Endothelial cell of umbilical vein (primary cell): ENCODE measurements at regions of chr3 and their contacts with region 1.

Region 1: GRCh38 chr3:129627429-129628168 is 21.1 kb upstream of the PLXND1 start:
- DNase-seq: peak; percentile 90
- H3K4me3 ChIP-seq: peak overlapping the region in 2 of 3 experiments; percentile 11 to 42
- H3K27ac ChIP-seq: peak overlapping the region; percentile 85
- H3K4me1 ChIP-seq: peaks cover 50% of the 10 kb centered on the region
- H3K27me3 ChIP-seq: no peaks in the 10 kb centered on the region
- CTCF ChIP-seq: peak; percentile 86 to 87
- POLR2A ChIP-seq: peak; percentile 51

Region 2: DNA sequence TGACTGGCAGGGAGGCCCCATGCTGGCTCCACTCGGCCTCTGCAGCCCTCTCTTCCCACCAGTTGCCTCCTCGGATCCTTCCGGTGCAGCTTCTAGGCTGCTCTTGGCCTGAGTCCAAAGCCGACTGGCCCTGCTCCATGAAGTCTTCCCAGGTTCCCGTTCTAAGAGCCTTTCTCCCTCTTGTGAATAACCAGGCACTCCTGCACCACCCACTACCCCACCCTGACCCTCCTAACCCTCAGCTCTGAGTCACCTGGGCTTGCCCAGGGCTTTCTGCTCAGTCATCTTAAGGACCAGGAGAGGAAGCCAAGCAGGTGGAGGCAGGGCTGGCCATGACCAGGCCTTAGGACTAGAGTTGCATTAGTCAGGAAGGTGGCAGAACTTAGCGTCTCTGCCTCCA is 415.8 kb before region 1 on chr3:
- CTCF ChIA-PET with region 1: no interaction called
- POLR2A ChIA-PET with region 1: no interaction called
- dilution Hi-C with region 1: no loop called
- intact Hi-C with region 1: no loop called
- DNase-seq: peak; percentile 75
- H3K4me3 ChIP-seq: no peak overlapping the region
- H3K27ac ChIP-seq: no peak overlapping the region
- H3K4me1 ChIP-seq: peaks cover 8% of the 10 kb centered on the region
- H3K27me3 ChIP-seq: no peaks in the 10 kb centered on the region
- CTCF ChIP-seq: no peak
- POLR2A ChIP-seq: no peak

Region 3: GRCh38 chr3:129358772-129359371 is 268.7 kb before region 1 on chr3:
- CTCF ChIA-PET with region 1: no interaction called
- POLR2A ChIA-PET with region 1: no interaction called
- dilution Hi-C with region 1: no loop called
- intact Hi-C with region 1: no loop called
- DNase-seq: no peak
- H3K4me3 ChIP-seq: no peak overlapping the region
- H3K27ac ChIP-seq: no peak overlapping the region
- H3K4me1 ChIP-seq: no peaks in the 10 kb centered on the region
- H3K27me3 ChIP-seq: no peaks in the 10 kb centered on the region
- CTCF ChIP-seq: no peak
- POLR2A ChIP-seq: no peak

Region 4: DNA sequence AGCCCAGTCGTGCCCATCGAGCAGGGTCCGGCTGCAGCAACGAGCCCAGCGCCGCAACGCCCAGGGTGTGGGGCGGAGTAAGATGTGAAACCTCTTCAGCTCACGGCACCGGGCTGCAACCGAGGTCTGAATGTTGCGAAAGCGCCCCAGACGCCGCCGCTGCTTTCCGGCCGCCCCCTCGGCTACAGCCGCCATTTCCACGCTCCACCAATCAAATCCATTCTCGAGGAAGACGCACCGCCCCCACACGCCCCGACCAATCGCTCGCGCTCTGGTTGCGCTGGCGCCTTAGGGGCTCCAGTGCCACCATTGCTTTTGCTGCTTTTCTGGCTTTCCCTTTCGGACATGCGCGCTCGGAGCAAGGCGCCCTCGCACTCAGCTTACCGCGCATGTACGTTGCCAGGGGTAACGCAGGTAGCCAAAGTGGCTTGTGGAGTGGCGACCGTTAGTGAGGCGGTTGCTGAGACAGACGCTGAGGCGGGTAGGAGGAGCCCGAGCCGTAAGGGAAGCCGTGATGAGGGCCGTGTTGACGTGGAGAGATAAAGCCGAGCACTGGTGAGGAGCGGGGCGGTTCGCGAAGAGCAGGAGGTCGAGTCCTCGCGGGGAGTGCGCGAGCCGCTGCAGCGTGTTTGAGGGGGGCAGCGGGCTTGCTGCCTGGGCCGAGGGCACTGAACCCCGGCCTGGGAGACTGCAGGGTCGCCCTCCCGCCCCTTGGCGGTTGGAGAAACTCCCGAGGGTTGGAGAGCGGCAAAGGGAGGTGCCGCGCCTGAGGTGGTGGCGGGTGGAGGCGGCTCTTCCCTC is 187.6 kb before region 1 on chr3 and contains the starts of genes IFT122 and MBD4:
- CTCF ChIA-PET with region 1: no interaction called
- POLR2A ChIA-PET with region 1: no interaction called
- dilution Hi-C with region 1: no loop called
- intact Hi-C with region 1: loop called (anchors 1 kb)
- DNase-seq: peak; percentile 100
- H3K4me3 ChIP-seq: peak within 1 kb of the TSS; percentile 70 to 81 (median 72)
- H3K27ac ChIP-seq: peak within 1 kb of the TSS; percentile 75
- H3K4me1 ChIP-seq: peaks cover 44% of the 10 kb centered on the region
- H3K27me3 ChIP-seq: no peaks in the 10 kb centered on the region
- CTCF ChIP-seq: no peak
- POLR2A ChIP-seq: peak; percentile 79
- total RNA-seq, gene IFT122: 36.6 and 41.7 TPM in 2 replicates
- total RNA-seq, gene MBD4: 33.2 and 39.5 TPM in 2 replicates

Region 5: DNA sequence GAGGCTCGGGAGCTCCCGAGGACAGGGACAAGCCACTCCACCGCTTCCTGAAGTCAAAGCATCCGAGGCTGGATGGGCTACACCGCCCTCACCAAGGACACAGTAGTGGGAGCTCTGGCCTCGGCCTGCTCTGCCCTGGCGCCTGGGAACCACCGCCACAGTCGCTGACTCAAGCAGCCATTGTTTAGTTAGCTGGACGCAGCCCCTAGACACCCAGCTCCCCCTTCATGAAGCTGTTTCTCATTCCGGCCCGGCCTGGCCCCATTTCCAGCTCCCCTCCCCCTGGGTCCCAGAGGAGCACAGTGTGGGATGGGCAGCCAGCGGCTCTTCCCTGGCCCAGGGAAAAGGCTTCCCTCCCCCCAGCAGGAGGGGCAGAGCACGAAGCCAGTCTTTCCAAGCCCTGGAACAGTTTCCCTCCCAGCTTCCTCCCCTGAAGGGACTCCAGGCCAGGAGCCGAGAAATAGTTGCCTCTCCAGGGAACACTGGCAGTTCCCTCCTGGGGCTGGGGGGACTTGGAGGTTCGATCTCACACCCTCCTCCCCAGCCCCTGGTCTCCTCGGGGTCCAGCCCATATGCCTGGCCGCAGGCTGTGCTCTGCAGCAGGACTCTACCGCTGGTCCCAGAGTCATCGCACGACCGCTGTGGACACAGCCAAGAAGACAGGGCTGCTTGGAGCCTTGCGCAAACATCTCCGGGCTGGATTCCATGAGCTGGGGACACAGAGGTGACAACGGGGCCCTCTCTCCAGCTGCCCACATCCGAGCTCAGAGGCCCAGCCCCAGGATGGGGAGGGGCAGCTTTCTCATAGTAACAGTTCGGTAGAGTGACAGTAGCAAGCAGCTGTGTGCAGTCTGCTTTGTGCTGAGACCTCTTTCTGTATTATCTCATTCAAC is 31.2 kb before region 1 on chr3:
- CTCF ChIA-PET with region 1: interaction called, 21 read pairs
- POLR2A ChIA-PET with region 1: interaction called, 3 read pairs
- dilution Hi-C with region 1: no loop called
- intact Hi-C with region 1: loop called (anchors 1 kb)
- DNase-seq: peak; percentile 98
- H3K4me3 ChIP-seq: peak overlapping the region in 2 of 3 experiments; percentile 1 to 10
- H3K27ac ChIP-seq: peak overlapping the region; percentile 91
- H3K4me1 ChIP-seq: peaks cover 96% of the 10 kb centered on the region
- H3K27me3 ChIP-seq: no peaks in the 10 kb centered on the region
- CTCF ChIP-seq: no peak
- POLR2A ChIP-seq: peak; percentile 45

Region 6: DNA sequence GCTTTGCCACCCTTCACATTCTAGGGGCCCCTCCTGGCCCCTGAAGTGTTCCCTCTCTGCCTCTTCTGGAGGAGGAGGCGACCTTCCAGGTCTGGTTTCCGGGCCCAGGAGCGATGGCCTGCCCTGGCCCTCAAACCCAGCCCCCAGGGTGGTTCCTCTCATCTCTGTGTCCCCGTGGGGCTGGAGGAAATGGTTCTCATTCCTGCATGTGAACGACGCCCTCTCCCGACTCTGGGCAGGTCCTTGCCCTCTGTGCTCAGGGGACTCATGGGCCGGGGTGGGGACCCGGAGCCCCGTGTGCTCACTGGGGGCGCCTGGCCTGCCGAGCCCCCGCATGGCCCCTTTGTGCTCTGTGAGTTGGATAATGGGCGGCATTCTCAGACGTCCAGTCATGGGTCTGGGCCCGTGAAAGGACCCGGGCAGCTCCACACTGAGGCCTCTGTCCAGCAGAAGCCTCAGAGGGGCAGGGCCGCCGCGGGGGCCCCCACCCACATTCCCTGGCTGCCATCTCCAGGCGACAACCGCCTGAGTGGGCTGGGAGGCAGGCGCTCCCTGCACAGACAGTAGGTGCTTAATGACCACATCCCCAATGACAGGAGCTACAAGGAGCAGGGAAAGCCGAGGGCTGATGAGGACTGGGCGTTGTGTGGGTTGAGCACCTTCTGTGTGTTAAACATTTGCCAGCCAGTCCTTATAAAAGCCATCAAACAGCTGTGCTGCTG is 15.6 kb before region 1 on chr3:
- CTCF ChIA-PET with region 1: interaction called, 11 read pairs
- POLR2A ChIA-PET with region 1: interaction called, 5 read pairs
- dilution Hi-C with region 1: no loop called
- intact Hi-C with region 1: loop called (anchors 1 kb)
- DNase-seq: peak; percentile 51
- H3K4me3 ChIP-seq: no peak overlapping the region
- H3K27ac ChIP-seq: peak overlapping the region; percentile 62
- H3K4me1 ChIP-seq: peaks cover 50% of the 10 kb centered on the region
- H3K27me3 ChIP-seq: no peaks in the 10 kb centered on the region
- CTCF ChIP-seq: no peak
- POLR2A ChIP-seq: no peak

Region 7: GRCh38 chr3:129732200-129732876 is 104.7 kb after region 1 on chr3:
- CTCF ChIA-PET with region 1: no interaction called
- POLR2A ChIA-PET with region 1: no interaction called
- dilution Hi-C with region 1: no loop called
- intact Hi-C with region 1: no loop called
- DNase-seq: no peak
- H3K4me3 ChIP-seq: no peak overlapping the region
- H3K27ac ChIP-seq: no peak overlapping the region
- H3K4me1 ChIP-seq: no peaks in the 10 kb centered on the region
- H3K27me3 ChIP-seq: no peaks in the 10 kb centered on the region
- CTCF ChIP-seq: no peak
- POLR2A ChIP-seq: no peak

Region 8: DNA sequence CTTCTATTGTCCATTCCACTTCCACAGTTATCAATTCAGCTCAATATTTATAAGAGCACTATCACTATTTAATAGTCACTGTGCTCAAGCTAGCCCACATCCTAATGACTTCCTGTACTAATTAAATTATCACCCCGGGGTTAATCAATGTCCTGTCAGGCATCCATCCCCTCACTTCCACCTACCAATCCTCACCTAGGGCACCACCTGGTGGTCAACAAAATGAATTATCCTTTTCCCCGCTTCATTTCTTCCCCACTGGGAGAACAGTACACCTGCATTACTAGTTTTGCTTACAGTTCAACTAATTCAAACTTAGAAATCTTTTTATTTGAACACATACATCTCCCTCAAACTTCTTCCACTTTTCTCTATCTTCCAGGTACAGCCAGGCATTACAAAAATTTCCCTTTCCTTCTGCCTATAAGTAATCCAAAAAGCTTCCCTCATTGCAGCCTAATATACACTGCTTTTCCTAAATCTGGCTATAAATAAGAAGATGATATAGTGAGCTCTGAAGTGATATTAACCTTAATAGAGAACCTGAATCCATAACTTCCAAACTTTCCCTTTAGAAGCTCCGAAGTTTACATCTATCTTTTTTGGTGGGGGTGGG is 197.4 kb after region 1 on chr3:
- CTCF ChIA-PET with region 1: interaction called, 54 read pairs
- POLR2A ChIA-PET with region 1: no interaction called
- dilution Hi-C with region 1: no loop called
- intact Hi-C with region 1: loop called (anchors 1 kb)
- DNase-seq: peak; percentile 59
- H3K4me3 ChIP-seq: no peak overlapping the region
- H3K27ac ChIP-seq: no peak overlapping the region
- H3K4me1 ChIP-seq: peaks cover 6% of the 10 kb centered on the region
- H3K27me3 ChIP-seq: no peaks in the 10 kb centered on the region
- CTCF ChIP-seq: peak; percentile 51 to 54
- POLR2A ChIP-seq: no peak

Region 9: GRCh38 chr3:129934234-129935123 is 306.9 kb after region 1 on chr3:
- CTCF ChIA-PET with region 1: interaction called, 26 read pairs
- POLR2A ChIA-PET with region 1: no interaction called
- dilution Hi-C with region 1: no loop called
- intact Hi-C with region 1: loop called (anchors 1 kb)
- DNase-seq: peak; percentile 47
- H3K4me3 ChIP-seq: no peak overlapping the region
- H3K27ac ChIP-seq: no peak overlapping the region
- H3K4me1 ChIP-seq: peaks cover 3% of the 10 kb centered on the region
- H3K27me3 ChIP-seq: peaks cover 0 to 8% of the 10 kb centered on the region in 2 experiments
- CTCF ChIP-seq: peak; percentile 73 to 88
- POLR2A ChIP-seq: no peak

Region 10: GRCh38 chr3:130093741-130094391 is 466.3 kb after region 1 on chr3:
- CTCF ChIA-PET with region 1: interaction called, 6 read pairs
- POLR2A ChIA-PET with region 1: no interaction called
- dilution Hi-C with region 1: no loop called
- intact Hi-C with region 1: loop called (anchors 10 kb)
- DNase-seq: no peak
- H3K4me3 ChIP-seq: no peak overlapping the region
- H3K27ac ChIP-seq: no peak overlapping the region
- H3K4me1 ChIP-seq: no peaks in the 10 kb centered on the region
- H3K27me3 ChIP-seq: no peaks in the 10 kb centered on the region
- CTCF ChIP-seq: no peak
- POLR2A ChIP-seq: no peak